IMR-90 (cell line): ENCODE measurements at regions of chr19 and their contacts with region 1.

Region 1: GRCh38 chr19:15101479-15102082 is 5.6 kb upstream of the SYDE1 start:
- DNase-seq: peak; percentile 56
- ATAC-seq: peak; percentile 85
- H3K4me3 ChIP-seq: no peak overlapping the region
- H3K27ac ChIP-seq: no peak overlapping the region
- H3K4me1 ChIP-seq: peaks cover under 1% of the 10 kb centered on the region; the same call in 1 of the 2 replicates
- H3K27me3 ChIP-seq: peaks cover 3% of the 10 kb centered on the region
- CTCF ChIP-seq: peak; percentile 68
- POLR2A ChIP-seq: no peak
- RAD21 ChIP-seq: peak; percentile 68

Region 2: DNA sequence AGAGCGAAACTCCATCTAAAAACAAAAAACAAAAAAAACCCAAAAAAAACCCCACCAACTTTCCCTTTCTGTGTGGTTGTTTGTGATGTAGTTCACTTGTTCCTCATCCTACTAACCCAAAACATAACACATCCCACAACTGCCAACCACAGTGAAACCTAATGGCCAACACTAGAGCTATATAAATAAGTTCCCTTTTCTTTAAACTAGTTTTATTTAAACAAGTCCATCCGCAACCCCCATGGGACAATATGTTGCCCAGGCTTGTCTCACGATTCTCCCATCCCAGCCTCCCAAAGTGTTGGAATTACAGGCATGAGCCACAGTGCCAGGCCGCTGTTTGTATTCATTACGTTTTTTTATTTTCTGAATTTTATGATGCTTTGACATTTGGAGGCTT is 791.5 kb before region 1 on chr19:
- CTCF ChIA-PET with region 1: no interaction called
- POLR2A ChIA-PET with region 1: no interaction called
- dilution Hi-C with region 1: no loop called
- in situ Hi-C with region 1: no loop called
- intact Hi-C with region 1: no loop called
- DNase-seq: no peak
- ATAC-seq: no peak; the same call in 1 of the 2 replicates
- H3K4me3 ChIP-seq: no peak overlapping the region
- H3K27ac ChIP-seq: no peak overlapping the region
- H3K4me1 ChIP-seq: no peaks in the 10 kb centered on the region
- H3K27me3 ChIP-seq: peaks cover 31% of the 10 kb centered on the region
- CTCF ChIP-seq: no peak
- POLR2A ChIP-seq: no peak
- RAD21 ChIP-seq: no peak

Region 3: DNA sequence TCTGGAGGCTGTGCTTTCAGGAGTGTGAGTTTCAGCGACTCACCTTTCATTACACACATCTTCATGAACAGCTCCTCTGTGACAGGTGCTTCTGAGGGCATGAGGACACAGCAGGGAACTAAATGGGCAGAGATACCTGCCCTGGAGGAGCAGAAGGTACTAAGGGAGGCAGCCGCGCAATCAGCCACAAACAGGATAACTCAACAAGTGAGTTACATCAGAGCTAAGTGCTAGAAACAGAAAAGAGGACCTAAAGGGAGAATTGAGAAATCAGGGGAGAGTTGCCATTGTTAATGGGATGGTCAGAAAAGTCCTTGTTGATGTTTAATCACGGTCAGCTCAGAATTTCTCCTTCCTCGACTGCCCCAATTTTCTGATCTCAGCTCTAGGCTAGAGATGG is 48.2 kb after region 1 on chr19:
- CTCF ChIA-PET with region 1: interaction called, 5 read pairs
- POLR2A ChIA-PET with region 1: no interaction called
- dilution Hi-C with region 1: no loop called
- in situ Hi-C with region 1: no loop called
- intact Hi-C with region 1: loop called (anchors 2 kb)
- DNase-seq: no peak
- ATAC-seq: no peak
- H3K4me3 ChIP-seq: no peak overlapping the region
- H3K27ac ChIP-seq: no peak overlapping the region
- H3K4me1 ChIP-seq: peaks cover 1% of the 10 kb centered on the region; the same call in 1 of the 2 replicates
- H3K27me3 ChIP-seq: peaks cover 6% of the 10 kb centered on the region; the same call in 1 of the 2 replicates
- CTCF ChIP-seq: no peak
- POLR2A ChIP-seq: no peak
- RAD21 ChIP-seq: no peak